ENCODE measurements at regions of chr12 and their contacts with region 1.

Region 1: DNA sequence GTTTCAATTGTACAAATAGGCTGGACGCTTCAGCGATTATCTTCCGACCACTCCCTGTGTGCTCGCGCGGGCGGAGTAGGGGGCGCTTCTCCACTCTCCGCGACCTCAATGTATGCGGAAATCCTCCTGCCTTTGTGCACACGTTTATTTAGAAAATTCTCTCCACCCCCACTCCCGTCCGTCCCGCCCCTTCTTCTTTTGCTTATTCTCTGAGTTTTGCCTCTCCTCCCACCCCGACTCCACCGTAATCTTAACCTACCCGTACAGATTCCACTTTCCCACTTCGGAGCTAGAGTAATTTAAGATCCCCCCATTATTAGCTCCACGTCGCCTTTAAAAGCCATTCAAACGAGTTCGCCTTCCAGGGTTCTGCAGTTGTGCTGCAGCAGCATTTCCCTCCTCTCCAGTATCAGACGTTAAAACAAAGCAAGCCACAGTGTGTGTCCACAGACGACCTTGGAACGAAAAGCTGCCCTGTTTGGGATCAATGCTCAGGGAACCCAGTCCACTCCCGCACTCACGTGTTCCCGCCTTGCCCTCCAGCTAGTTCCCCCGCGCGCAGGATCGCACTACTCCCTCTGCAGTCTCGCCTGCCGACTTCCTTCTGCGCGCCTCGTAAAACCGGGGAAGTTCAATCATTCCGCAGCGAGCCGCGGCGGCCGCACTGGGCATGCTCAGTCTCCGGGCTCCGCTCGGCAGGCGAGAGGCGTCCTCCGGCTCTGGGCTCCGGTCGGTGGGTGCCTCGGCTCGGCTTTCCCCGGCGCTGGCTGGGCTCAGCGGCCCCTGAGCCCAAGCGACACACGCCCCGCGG is at the start of gene ANO6:
- DNase-seq: peak; percentile 90
- ATAC-seq: peak; percentile 75
- H3K4me3 ChIP-seq: peak within 1 kb of the TSS; percentile 94
- H3K27ac ChIP-seq: peak within 1 kb of the TSS; percentile 93
- H3K4me1 ChIP-seq: peaks cover 29% of the 10 kb centered on the region
- H3K27me3 ChIP-seq: no peaks in the 10 kb centered on the region
- CTCF ChIP-seq: peak; percentile 48
- total RNA-seq, gene ANO6: 18.1 and 23.0 TPM in 2 replicates

Region 2: GRCh38 chr12:45170456-45171042 is 45.1 kb before region 1 on chr12:
- CTCF ChIA-PET with region 1: interaction called, 3 read pairs
- POLR2A ChIA-PET with region 1: no interaction called
- intact Hi-C with region 1: loop called (anchors 2 kb)
- DNase-seq: peak; percentile 85
- ATAC-seq: peak; percentile 84
- H3K4me3 ChIP-seq: no peak overlapping the region
- H3K27ac ChIP-seq: no peak overlapping the region
- H3K4me1 ChIP-seq: no peaks in the 10 kb centered on the region
- H3K27me3 ChIP-seq: no peaks in the 10 kb centered on the region
- CTCF ChIP-seq: peak; percentile 95

Region 3: GRCh38 chr12:45200491-45201043 is 15.1 kb before region 1 on chr12:
- CTCF ChIA-PET with region 1: no interaction called
- POLR2A ChIA-PET with region 1: no interaction called
- intact Hi-C with region 1: no loop called
- DNase-seq: no peak
- ATAC-seq: no peak
- H3K4me3 ChIP-seq: no peak overlapping the region
- H3K27ac ChIP-seq: no peak overlapping the region
- H3K4me1 ChIP-seq: no peaks in the 10 kb centered on the region
- H3K27me3 ChIP-seq: no peaks in the 10 kb centered on the region
- CTCF ChIP-seq: no peak

Region 4: GRCh38 chr12:45234139-45234846 is 18.7 kb after region 1 on chr12:
- CTCF ChIA-PET with region 1: no interaction called
- POLR2A ChIA-PET with region 1: interaction called, 15 read pairs
- intact Hi-C with region 1: loop called (anchors 1 kb)
- DNase-seq: peak; percentile 96
- ATAC-seq: peak; percentile 69
- H3K4me3 ChIP-seq: peak overlapping the region; percentile 59
- H3K27ac ChIP-seq: peak overlapping the region; percentile 90
- H3K4me1 ChIP-seq: peaks cover 54% of the 10 kb centered on the region
- H3K27me3 ChIP-seq: no peaks in the 10 kb centered on the region
- CTCF ChIP-seq: no peak

Region 5: GRCh38 chr12:45268672-45269411 is 53.2 kb after region 1 on chr12:
- CTCF ChIA-PET with region 1: interaction called, 3 read pairs
- POLR2A ChIA-PET with region 1: no interaction called
- intact Hi-C with region 1: loop called (anchors 2 kb)
- DNase-seq: peak; percentile 95
- ATAC-seq: peak; percentile 73
- H3K4me3 ChIP-seq: peak overlapping the region; percentile 41
- H3K27ac ChIP-seq: peak overlapping the region; percentile 88
- H3K4me1 ChIP-seq: peaks cover 32% of the 10 kb centered on the region
- H3K27me3 ChIP-seq: no peaks in the 10 kb centered on the region
- CTCF ChIP-seq: peak; percentile 87

Region 6: DNA sequence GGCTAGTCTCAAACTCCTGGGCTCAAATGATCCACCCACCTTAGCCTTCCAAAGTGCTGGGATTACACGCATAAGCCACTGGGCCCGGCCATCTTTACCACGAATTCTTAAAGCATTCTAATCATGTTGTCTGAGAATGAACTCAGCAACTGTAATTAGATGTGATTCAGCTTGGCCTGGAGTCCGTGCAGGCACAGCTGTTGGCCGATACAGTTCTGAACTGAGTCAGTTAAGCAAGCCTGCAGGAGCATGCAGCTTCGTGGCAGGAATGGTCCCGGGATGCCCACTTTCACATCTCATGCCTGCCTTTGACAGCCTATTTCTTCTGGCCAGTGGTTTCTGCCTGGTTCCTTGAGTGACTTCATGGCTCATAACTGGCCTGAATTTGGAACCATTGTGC is 194.3 kb after region 1 on chr12:
- CTCF ChIA-PET with region 1: no interaction called
- POLR2A ChIA-PET with region 1: no interaction called
- intact Hi-C with region 1: loop called (anchors 2 kb)
- DNase-seq: peak; percentile 8
- ATAC-seq: peak; percentile 28; the same call in 1 of the 2 replicates
- H3K4me3 ChIP-seq: no peak overlapping the region
- H3K27ac ChIP-seq: no peak overlapping the region
- H3K4me1 ChIP-seq: peaks cover 4% of the 10 kb centered on the region; the same call in 1 of the 2 replicates
- H3K27me3 ChIP-seq: no peaks in the 10 kb centered on the region
- CTCF ChIP-seq: no peak